Left lung (tissue), 14 donors: ENCODE measurements at regions of chr20 and their contacts with region 1.

Region 1: GRCh38 chr20:8664778-8665177 is 404.1 kb upstream of the PLCB4 start:
- DNase-seq: no peak
- ATAC-seq: no peak
- H3K4me3 ChIP-seq: no peak overlapping the region
- H3K27ac ChIP-seq: no peak overlapping the region
- H3K4me1 ChIP-seq: no peaks in the 10 kb centered on the region
- H3K27me3 ChIP-seq: no peaks in the 10 kb centered on the region
- CTCF ChIP-seq: no peak

Region 2: GRCh38 chr20:8144282-8145245 is 520.2 kb before region 1 on chr20:
- intact Hi-C with region 1: loop called in 1 of 2 experiments (anchors 10 kb)
- DNase-seq: no peak
- ATAC-seq: no peak
- H3K4me3 ChIP-seq: no peak overlapping the region
- H3K27ac ChIP-seq: no peak overlapping the region
- H3K4me1 ChIP-seq: peaks cover 0 to 26% of the 10 kb centered on the region in 2 donors
- H3K27me3 ChIP-seq: no peaks in the 10 kb centered on the region
- CTCF ChIP-seq: no peak

Region 3: GRCh38 chr20:8431538-8432434 is 233.0 kb before region 1 on chr20:
- intact Hi-C with region 1: no loop called
- DNase-seq: peak in 1 of 4 donors; percentile 17
- ATAC-seq: no peak
- H3K4me3 ChIP-seq: no peak overlapping the region
- H3K27ac ChIP-seq: peak overlapping the region in 1 of 2 donors; percentile 33
- H3K4me1 ChIP-seq: peaks cover 0 to 67% of the 10 kb centered on the region in 2 donors
- H3K27me3 ChIP-seq: no peaks in the 10 kb centered on the region
- CTCF ChIP-seq: no peak

Region 4: DNA sequence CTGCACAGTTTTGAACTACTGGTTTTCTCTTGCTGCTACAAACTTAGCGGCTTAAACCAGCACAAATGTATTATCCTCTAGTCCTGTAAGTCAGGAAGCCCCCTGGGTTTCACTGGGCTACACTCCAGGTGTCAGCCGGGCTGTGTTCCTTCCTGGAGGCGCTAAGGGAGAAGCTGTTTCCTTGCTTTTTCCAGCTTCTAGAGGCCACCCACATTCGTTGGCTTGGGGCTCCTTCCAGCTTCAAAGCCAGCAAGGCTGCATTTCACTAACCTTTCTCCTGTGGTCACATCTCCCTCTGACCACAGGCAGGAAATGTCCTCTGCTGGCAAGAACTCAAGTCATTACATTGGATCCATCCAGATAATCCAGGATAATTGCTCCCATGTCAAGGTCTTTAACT is 53.5 kb after region 1 on chr20:
- intact Hi-C with region 1: no loop called
- DNase-seq: no peak
- ATAC-seq: no peak
- H3K4me3 ChIP-seq: no peak overlapping the region
- H3K27ac ChIP-seq: no peak overlapping the region
- H3K4me1 ChIP-seq: peaks cover 0 to 4% of the 10 kb centered on the region in 2 donors
- H3K27me3 ChIP-seq: no peaks in the 10 kb centered on the region
- CTCF ChIP-seq: no peak